ENCODE measurements at regions of chr1 and their contacts with region 1.

Region 1: DNA sequence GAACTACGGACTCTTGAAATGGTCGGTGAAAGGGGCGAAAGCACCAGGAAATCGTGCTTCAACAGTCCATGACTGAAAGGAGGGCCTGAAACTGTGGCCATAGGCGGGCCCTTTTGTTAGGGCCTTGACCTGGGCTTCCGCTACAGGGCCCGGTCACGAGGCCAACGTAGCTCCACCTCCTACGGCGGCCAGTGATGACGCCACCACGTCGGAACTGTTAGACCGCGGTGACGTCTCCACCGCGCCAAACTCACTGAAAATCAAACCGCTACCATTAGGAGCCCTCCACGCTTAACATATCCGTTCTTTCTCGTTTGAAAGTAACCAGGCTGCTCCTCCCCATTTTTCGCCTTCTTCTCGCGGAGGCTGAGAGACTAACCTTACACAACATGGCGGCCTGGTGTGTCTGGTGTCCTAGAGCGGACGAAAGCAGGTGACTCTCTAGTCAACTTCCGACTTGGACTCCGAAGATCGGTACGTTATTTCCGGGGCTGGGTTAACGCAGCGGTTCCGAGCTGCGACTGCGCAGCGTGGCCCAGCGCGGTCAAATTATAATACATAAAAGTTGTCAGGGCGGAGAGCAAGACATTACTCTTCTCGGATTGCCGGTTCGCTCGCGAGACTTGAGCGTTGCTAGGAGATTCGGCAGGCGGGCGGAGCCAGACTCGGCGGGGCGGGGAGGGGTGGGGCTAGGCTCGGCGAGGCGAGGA is 376 bp upstream of the CACYBP start:
- DNase-seq: peak; percentile 86 to 99
- ATAC-seq: peak; percentile 88 to 92
- H3K4me3 ChIP-seq: peak overlapping the region; percentile 90
- H3K27ac ChIP-seq: peak overlapping the region; percentile 95 to 98
- H3K4me1 ChIP-seq: peaks cover 37% of the 10 kb centered on the region
- CTCF ChIP-seq: no peak
- EP300 ChIP-seq: no peak
- POLR2A ChIP-seq: peak; percentile 84
- RAD21 ChIP-seq: no peak

Region 2: GRCh38 chr1:174800216-174800851 is 199.0 kb before region 1 on chr1:
- CTCF ChIA-PET with region 1: interaction called, 11 read pairs
- POLR2A ChIA-PET with region 1: interaction called, 7 read pairs
- DNase-seq: no peak
- ATAC-seq: peak in 1 of 2 experiments; percentile 10; a peak in 1 of 6 replicates
- H3K4me3 ChIP-seq: no peak overlapping the region
- H3K27ac ChIP-seq: no peak overlapping the region; a peak in 1 of 6 replicates
- H3K4me1 ChIP-seq: peaks cover 19% of the 10 kb centered on the region; the same call in 1 of the 3 replicates
- CTCF ChIP-seq: no peak
- EP300 ChIP-seq: no peak
- POLR2A ChIP-seq: no peak
- RAD21 ChIP-seq: no peak

Region 3: GRCh38 chr1:174984952-174985351 is 14.4 kb before region 1 on chr1:
- CTCF ChIA-PET with region 1: interaction called, 27 read pairs
- POLR2A ChIA-PET with region 1: interaction called, 13 read pairs
- DNase-seq: no peak
- ATAC-seq: no peak
- H3K4me3 ChIP-seq: no peak overlapping the region
- H3K27ac ChIP-seq: no peak overlapping the region
- H3K4me1 ChIP-seq: 0 out of 3 replicates have a peak, but pooled peaks cover 2% of the 10 kb centered on the region
- CTCF ChIP-seq: no peak
- EP300 ChIP-seq: no peak
- POLR2A ChIP-seq: no peak
- RAD21 ChIP-seq: no peak

Region 4: GRCh38 chr1:175015243-175015642 is 15.9 kb after region 1 on chr1:
- CTCF ChIA-PET with region 1: interaction called, 4 read pairs
- POLR2A ChIA-PET with region 1: interaction called, 16 read pairs
- DNase-seq: no peak
- ATAC-seq: no peak
- H3K4me3 ChIP-seq: no peak overlapping the region
- H3K27ac ChIP-seq: no peak overlapping the region
- H3K4me1 ChIP-seq: no peaks in the 10 kb centered on the region
- CTCF ChIP-seq: no peak
- EP300 ChIP-seq: no peak
- POLR2A ChIP-seq: no peak
- RAD21 ChIP-seq: no peak

Region 5: DNA sequence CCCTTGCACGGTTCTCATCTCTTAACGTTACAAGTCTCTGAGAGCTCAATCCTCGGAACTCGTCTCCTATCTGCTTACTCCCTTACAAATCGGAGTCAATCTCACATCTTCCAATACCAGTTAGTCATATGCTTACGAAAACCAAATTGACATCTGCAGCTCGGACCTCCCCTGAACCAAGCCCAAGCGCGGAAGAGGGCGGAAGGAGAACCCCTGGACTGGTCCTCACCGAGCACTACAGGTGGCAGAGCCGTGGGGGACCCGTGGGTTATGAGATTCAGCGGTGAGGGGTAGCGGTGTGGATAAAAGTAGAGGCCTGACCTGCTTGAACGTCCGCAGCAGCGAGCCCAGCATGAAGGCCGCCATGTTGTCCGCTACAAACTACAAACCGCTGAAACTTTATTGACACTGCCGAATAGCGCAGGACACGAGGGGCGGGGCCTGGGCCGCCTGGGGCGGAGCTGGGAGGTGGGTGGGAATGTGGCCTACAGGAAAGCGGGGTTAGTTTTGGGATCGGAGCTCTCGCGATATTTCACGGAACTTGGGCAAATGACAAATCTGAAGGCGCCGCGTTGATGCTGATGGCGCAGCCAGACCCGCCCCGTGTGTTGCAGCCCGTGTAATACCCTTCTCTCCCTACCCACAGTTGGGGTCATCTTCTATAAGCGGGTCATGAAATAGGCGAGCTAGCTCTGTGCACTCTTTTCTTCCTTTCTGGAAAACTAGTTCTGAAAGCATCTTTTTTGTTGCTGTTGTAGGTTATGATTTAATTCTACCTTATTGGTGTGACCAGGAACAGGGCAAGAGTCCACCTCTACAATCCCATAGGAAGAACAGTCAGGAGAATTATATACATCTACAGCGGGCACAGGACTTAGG is 23.9 kb after region 1 on chr1 and contains the start of gene MRPS14:
- CTCF ChIA-PET with region 1: interaction called, 3 read pairs
- POLR2A ChIA-PET with region 1: interaction called, 75 read pairs
- DNase-seq: peak; percentile 95 to 99
- ATAC-seq: peak; percentile 96 to 98
- H3K4me3 ChIP-seq: peak within 1 kb of the TSS; percentile 65
- H3K27ac ChIP-seq: peak within 1 kb of the TSS; percentile 79 to 90
- H3K4me1 ChIP-seq: peaks cover 8% of the 10 kb centered on the region; the same call in 1 of the 3 replicates
- CTCF ChIP-seq: no peak
- EP300 ChIP-seq: no peak
- POLR2A ChIP-seq: peak; percentile 70
- RAD21 ChIP-seq: no peak
- polyA plus RNA-seq, gene MRPS14: 40.9 and 45.1 TPM in 2 replicates

Region 6: DNA sequence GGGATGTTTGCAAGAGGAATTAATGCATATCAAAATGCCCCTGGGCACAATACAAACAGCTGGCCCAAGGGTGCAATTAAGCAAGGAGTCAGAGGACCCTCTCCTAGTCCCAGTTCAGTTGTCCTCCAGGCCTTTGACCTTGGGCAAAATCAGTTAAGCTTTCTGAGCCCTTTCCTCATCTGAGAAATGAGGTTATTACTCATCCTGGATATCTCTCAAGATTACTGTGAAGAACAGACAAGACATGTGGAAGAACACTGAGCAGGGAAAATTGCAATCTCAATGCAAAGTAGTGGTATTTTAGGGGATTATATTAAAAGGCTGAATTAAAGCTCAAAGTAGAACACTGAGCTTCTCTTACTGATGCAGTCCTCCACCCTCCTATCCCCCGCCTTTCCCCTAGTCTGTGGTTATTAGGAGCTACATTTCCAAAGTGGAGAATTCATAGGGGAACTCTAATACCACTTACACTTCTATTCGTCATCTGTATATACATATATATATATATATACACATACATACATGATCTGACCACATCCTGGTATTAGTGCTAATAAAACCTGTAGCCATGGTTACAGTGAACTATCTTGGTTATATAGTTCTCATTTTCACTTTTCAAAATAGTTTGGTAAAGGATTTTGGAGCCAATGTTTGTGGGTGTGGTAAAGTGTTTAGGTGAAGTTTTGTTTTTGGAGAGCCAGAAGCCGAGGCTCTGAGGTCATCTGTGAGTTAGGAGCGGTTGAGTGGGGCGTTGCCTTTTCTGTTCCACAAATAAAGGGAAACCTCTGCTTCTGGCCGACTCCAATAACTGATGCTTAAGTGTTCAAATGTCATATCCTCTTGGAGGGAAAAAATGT is 175.2 kb after region 1 on chr1:
- CTCF ChIA-PET with region 1: no interaction called
- POLR2A ChIA-PET with region 1: no interaction called
- DNase-seq: no peak
- ATAC-seq: no peak
- H3K4me3 ChIP-seq: no peak overlapping the region
- H3K27ac ChIP-seq: no peak overlapping the region
- H3K4me1 ChIP-seq: no peaks in the 10 kb centered on the region
- CTCF ChIP-seq: no peak
- EP300 ChIP-seq: no peak
- POLR2A ChIP-seq: no peak
- RAD21 ChIP-seq: no peak

Measured in A549 (cell line).